CD4-positive, alpha-beta memory T cell (primary cell): ENCODE measurements at regions of chr2 and their contacts with region 1.

Region 1: DNA sequence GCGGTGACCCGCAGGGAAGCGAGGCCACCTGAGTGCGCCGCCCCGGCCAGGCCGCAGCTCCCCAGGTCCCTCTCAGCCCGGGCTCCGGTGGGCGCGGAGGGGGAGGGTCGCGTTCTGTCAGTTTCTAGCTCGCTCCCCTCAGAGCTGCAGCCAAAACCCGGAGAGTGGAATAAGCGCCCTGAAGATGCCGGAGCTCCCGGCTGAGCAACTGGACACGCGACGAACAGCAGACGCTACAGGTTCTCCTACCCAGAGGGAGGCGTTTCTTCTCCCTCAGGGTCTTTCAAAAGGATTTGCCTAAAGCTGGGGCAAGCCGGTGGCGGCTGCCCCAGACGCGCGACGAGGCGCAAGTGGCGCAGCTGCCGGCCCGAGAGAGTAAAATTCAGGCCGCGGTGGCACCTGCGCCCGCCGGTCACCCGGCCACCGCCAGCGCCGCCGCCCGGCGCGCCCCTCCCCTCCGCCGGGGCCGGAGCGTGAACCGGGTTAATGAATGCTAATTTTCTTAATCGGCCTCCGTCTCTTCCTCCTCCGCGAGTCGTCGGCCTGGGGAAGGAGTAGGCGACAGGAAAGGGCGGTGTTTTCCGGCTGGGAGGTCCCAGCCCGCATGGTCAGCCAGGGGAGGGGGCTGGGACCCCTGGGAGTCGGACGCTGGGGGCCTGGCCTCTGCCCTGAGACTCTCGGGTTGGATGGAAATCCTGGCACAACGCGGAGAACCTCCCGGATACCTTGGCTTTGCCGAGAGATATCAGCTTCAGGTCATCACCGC is 845 bp upstream of the CDC42EP3 start:
- DNase-seq: peak; percentile 56 to 78 (median 70)
- H3K4me3 ChIP-seq: peak overlapping the region; percentile 65 to 89
- H3K4me3 Mint-ChIP-seq: peak overlapping the region; percentile 83 to 97 (median 90)
- H3K27ac ChIP-seq: peak overlapping the region; percentile 85
- H3K27ac Mint-ChIP-seq: peak overlapping the region; percentile 87 to 95 (median 90)
- H3K4me1 ChIP-seq: peaks cover 34% of the 10 kb centered on the region
- H3K4me1 Mint-ChIP-seq: peaks cover 26 to 57% (median 42%) of the 10 kb centered on the region in 4 donors
- H3K27me3 ChIP-seq: no peaks in the 10 kb centered on the region
- H3K27me3 Mint-ChIP-seq: no peaks in the 10 kb centered on the region

Region 2: GRCh38 chr2:36711741-36712288 is 960.5 kb before region 1 on chr2:
- CTCF ChIA-PET with region 1: no interaction called
- POLR2A ChIA-PET with region 1: no interaction called
- intact Hi-C with region 1: no loop called
- DNase-seq: no peak
- H3K4me3 ChIP-seq: no peak overlapping the region
- H3K4me3 Mint-ChIP-seq: no peak overlapping the region
- H3K27ac ChIP-seq: no peak overlapping the region
- H3K27ac Mint-ChIP-seq: no peak overlapping the region
- H3K4me1 ChIP-seq: no peaks in the 10 kb centered on the region
- H3K4me1 Mint-ChIP-seq: no peaks in the 10 kb centered on the region
- H3K27me3 ChIP-seq: no peaks in the 10 kb centered on the region
- H3K27me3 Mint-ChIP-seq: peaks cover 3 to 8% of the 10 kb centered on the region in 2 donors

Region 3: GRCh38 chr2:37537316-37537715 is 135.0 kb before region 1 on chr2:
- CTCF ChIA-PET with region 1: interaction called, 4 read pairs
- POLR2A ChIA-PET with region 1: interaction called, 3 read pairs
- intact Hi-C with region 1: loop called (anchors 2 kb)
- DNase-seq: no peak
- H3K4me3 ChIP-seq: no peak overlapping the region
- H3K4me3 Mint-ChIP-seq: no peak overlapping the region
- H3K27ac ChIP-seq: no peak overlapping the region
- H3K27ac Mint-ChIP-seq: no peak overlapping the region
- H3K4me1 ChIP-seq: no peaks in the 10 kb centered on the region
- H3K4me1 Mint-ChIP-seq: peaks cover 0 to 5% (median under 1%) of the 10 kb centered on the region in 4 donors
- H3K27me3 ChIP-seq: no peaks in the 10 kb centered on the region
- H3K27me3 Mint-ChIP-seq: peaks cover 0 to 1% of the 10 kb centered on the region in 2 donors

Region 4: GRCh38 chr2:37615804-37616676 is 56.2 kb before region 1 on chr2:
- CTCF ChIA-PET with region 1: no interaction called
- POLR2A ChIA-PET with region 1: interaction called, 52 read pairs
- intact Hi-C with region 1: loop called (anchors 5 kb)
- DNase-seq: peak; percentile 73 to 81 (median 77)
- H3K4me3 ChIP-seq: no peak overlapping the region
- H3K4me3 Mint-ChIP-seq: peak overlapping the region in 7 of 8 donors; percentile 26 to 76 (median 74)
- H3K27ac ChIP-seq: peak overlapping the region; percentile 37
- H3K27ac Mint-ChIP-seq: peak overlapping the region; percentile 90 to 97 (median 96)
- H3K4me1 ChIP-seq: peaks cover 72% of the 10 kb centered on the region
- H3K4me1 Mint-ChIP-seq: peaks cover 53 to 80% (median 70%) of the 10 kb centered on the region in 4 donors
- H3K27me3 ChIP-seq: no peaks in the 10 kb centered on the region
- H3K27me3 Mint-ChIP-seq: no peaks in the 10 kb centered on the region

Region 5: DNA sequence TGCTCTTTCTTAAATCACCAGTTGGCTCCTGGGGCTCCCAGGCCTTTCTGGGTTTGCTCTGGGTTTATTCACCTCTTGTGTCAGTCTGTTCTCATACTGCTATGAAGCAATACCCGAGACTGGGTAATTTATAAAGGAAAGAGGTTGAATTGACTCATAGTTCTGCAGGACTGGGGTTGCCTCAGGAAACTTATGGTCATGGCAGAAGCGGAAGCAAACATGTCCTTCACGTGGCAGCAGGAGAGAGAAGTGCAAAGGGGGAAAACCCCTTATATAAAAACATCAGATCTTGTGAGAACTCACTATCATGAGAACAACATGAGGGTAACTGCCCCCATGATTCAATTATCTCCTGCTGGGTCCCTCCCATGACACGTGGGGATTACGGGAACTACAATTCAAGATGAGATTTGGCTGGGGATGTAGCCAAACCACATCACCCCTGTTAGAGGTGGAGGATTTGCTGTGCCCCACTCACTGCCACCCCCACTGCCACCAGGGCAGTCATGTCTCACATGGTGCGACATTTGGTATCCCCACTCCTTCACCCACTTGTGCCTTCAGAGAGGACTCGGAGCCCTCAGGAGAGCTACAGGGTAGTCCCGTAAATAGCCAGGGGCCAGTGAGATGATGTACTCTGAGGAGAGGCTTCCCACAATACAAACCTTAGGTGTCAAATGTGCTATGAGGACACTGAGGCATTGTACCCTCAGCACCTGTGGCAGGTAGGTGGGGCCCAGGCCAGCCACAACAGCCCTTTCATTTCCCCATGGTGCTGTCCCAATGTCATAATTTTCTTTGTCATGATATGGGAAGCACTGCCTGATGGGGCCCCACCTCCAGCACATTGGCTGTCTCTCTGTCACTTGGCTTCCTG is 36.5 kb before region 1 on chr2:
- CTCF ChIA-PET with region 1: no interaction called
- POLR2A ChIA-PET with region 1: interaction called, 5 read pairs
- intact Hi-C with region 1: loop called (anchors 5 kb)
- DNase-seq: peak; percentile 70 to 94 (median 78)
- H3K4me3 ChIP-seq: peak overlapping the region in 1 of 2 donors; percentile 22
- H3K4me3 Mint-ChIP-seq: peak overlapping the region in 7 of 8 donors; percentile 54 to 80 (median 66)
- H3K27ac ChIP-seq: peak overlapping the region; percentile 72
- H3K27ac Mint-ChIP-seq: peak overlapping the region; percentile 92 to 98 (median 94)
- H3K4me1 ChIP-seq: peaks cover 76% of the 10 kb centered on the region
- H3K4me1 Mint-ChIP-seq: peaks cover 68 to 90% (median 75%) of the 10 kb centered on the region in 4 donors
- H3K27me3 ChIP-seq: no peaks in the 10 kb centered on the region
- H3K27me3 Mint-ChIP-seq: no peaks in the 10 kb centered on the region

Region 6: DNA sequence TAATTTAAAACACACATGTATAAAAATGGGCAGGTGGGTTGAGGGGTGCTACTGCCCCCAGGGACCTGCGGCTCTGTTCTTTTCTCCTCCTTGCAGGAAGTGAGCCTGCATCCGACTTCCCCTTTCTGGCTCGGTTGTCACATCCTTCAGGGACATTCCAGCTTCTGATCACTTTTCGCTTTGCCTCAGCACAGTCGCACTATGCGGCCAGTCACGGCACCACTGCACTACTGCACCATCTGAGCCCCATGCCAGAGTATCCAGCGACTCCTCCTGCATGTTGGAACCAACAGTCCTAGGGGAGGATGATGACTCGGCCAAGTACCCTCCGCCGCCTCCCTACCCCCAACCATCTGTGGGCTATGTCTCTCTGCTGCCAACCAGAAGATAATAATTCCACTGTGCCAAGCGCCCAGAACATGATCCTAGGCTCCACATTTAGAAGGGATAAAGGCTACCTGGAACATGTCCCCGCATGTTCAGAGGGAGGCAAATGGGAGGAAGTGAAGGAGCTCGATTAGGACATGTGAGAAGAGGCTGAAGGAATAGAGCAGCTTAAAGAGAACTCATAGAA is 18.4 kb before region 1 on chr2:
- CTCF ChIA-PET with region 1: interaction called, 26 read pairs
- POLR2A ChIA-PET with region 1: interaction called, 77 read pairs
- intact Hi-C with region 1: loop called (anchors 1 kb)
- DNase-seq: no peak
- H3K4me3 ChIP-seq: no peak overlapping the region
- H3K4me3 Mint-ChIP-seq: peak overlapping the region in 7 of 8 donors; percentile 48 to 76 (median 70)
- H3K27ac ChIP-seq: peak overlapping the region; percentile 63
- H3K27ac Mint-ChIP-seq: peak overlapping the region; percentile 78 to 96 (median 89)
- H3K4me1 ChIP-seq: peaks cover 96% of the 10 kb centered on the region
- H3K4me1 Mint-ChIP-seq: peaks cover 80 to 98% (median 88%) of the 10 kb centered on the region in 4 donors
- H3K27me3 ChIP-seq: no peaks in the 10 kb centered on the region
- H3K27me3 Mint-ChIP-seq: no peaks in the 10 kb centered on the region

Region 7: DNA sequence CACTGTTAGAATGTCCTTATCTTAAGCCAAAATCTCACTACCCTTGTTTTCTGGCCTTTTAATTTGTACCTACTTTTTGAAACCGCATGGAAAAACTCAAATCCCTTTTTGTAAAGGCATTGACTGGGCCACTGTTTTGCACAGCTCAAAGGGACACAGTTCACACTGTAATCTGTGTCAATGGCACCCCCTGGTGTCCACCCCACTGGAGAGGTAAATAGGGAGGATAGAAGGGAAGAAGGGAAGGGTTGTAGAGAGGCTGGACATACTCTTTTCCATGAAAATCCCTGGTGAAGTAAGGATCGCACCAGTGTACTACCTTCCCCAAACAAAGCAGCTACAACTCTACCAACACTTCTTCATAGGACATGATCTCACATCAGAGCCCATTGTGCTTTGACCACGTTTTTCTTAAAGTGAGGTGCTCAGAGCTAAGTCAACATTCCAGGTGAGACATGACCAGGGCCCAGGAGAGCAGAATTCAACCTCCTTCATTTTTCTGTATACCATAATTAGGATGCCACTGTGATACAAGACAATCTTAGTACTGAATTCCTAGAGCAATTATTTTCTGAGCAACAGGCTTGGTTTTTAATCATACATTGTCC is 160.4 kb after region 1 on chr2:
- CTCF ChIA-PET with region 1: interaction called, 14 read pairs
- POLR2A ChIA-PET with region 1: interaction called, 3 read pairs
- intact Hi-C with region 1: loop called (anchors 5 kb)
- DNase-seq: peak; percentile 69 to 75 (median 74)
- H3K4me3 ChIP-seq: no peak overlapping the region
- H3K4me3 Mint-ChIP-seq: no peak overlapping the region
- H3K27ac ChIP-seq: no peak overlapping the region
- H3K27ac Mint-ChIP-seq: peak overlapping the region in 2 of 7 donors; percentile 16 to 48
- H3K4me1 ChIP-seq: peaks cover 16% of the 10 kb centered on the region
- H3K4me1 Mint-ChIP-seq: peaks cover 5 to 26% (median 11%) of the 10 kb centered on the region in 4 donors
- H3K27me3 ChIP-seq: no peaks in the 10 kb centered on the region
- H3K27me3 Mint-ChIP-seq: no peaks in the 10 kb centered on the region